Head of caudate nucleus (tissue), 42 donors: ENCODE measurements at regions of chr16 and their contacts with region 1.

Region 1: GRCh38 chr16:78235168-78235800 is 135.8 kb downstream of the WWOX start:
- DNase-seq: peak; percentile 40 to 94 (median 83)

Region 2: GRCh38 chr16:78122774-78123315 is 112.4 kb before region 1 on chr16:
- intact Hi-C with region 1: loop called (anchors 5 kb)
- DNase-seq: peak in 28 of 42 donors; percentile 32 to 84 (median 55)

Region 3: GRCh38 chr16:78200623-78201096 is 34.6 kb before region 1 on chr16:
- intact Hi-C with region 1: no loop called
- DNase-seq: peak in 1 of 42 donors; percentile 8